ENCODE measurements at regions of chr4 and their contacts with region 1.

Region 1: GRCh38 chr4:15001869-15002658 is at the start of gene CPEB2:
- DNase-seq: peak; percentile 67
- ATAC-seq: peak; percentile 75
- H3K4me3 ChIP-seq: peak within 1 kb of the TSS; percentile 65 to 66
- H3K27ac ChIP-seq: peak within 1 kb of the TSS; percentile 71; the same call in 1 of the 2 replicates
- H3K4me1 ChIP-seq: peaks cover 2 to 18% of the 10 kb centered on the region in 2 experiments; a peak in 3 of 4 replicates
- H3K27me3 ChIP-seq: no peaks in the 10 kb centered on the region
- CTCF ChIP-seq: no peak; a peak in 1 of 6 replicates
- POLR2A ChIP-seq: peak; percentile 80
- RAD21 ChIP-seq: no peak
- total RNA-seq, gene CPEB2: 1.3 TPM

Region 2: DNA sequence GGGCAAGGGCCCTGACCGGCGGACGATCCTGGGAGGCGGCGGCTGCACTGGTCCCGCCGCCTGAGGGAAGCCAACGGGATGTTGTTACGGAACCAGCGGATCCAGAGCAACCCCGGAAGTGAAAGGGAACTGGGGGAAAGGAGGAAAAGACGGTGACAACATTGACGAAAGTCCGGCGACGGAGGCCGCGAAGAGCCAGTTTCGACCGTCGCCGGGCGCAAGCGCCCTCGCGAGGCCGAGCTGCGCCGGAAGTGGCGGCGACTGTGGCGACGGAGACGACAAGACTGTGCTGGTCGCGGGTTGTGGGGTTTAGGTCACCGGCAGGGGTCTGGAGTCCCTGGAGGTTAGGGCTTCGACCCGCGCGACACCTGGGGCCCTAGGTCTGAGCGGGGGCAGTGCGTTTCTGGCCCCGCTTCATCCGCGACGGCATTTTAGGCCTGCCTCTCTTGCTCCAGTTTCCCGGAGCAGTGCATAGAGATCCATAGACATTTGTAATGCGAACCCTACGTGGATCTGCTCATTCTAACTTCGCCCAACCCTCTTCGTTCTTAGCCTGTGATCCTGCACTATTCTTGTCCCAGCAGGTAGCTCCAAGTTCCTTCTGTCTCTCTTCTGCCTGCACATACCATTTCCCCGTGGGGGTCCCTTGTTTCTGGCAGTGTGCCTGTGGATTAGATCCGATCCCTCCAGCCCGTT is 1374.3 kb before region 1 on chr4 and contains the start of gene BOD1L1:
- CTCF ChIA-PET with region 1: no interaction called
- POLR2A ChIA-PET with region 1: no interaction called
- RAD21 ChIA-PET with region 1: no interaction called
- intact Hi-C with region 1: loop called (anchors 10 kb)
- DNase-seq: peak; percentile 85
- ATAC-seq: peak; percentile 89
- H3K4me3 ChIP-seq: peak within 1 kb of the TSS; percentile 80 to 92
- H3K27ac ChIP-seq: peak within 1 kb of the TSS; percentile 59
- H3K4me1 ChIP-seq: peaks cover 9 to 22% of the 10 kb centered on the region in 2 experiments
- H3K27me3 ChIP-seq: no peaks in the 10 kb centered on the region
- CTCF ChIP-seq: peak in 2 of 3 experiments; percentile 32 to 47; a peak in 3 of 6 replicates
- POLR2A ChIP-seq: peak; percentile 65
- RAD21 ChIP-seq: no peak; the same call in 1 of the 2 replicates
- total RNA-seq, gene BOD1L1: 22.4 TPM

Region 3: GRCh38 chr4:14856076-14856933 is 145.8 kb before region 1 on chr4:
- CTCF ChIA-PET with region 1: no interaction called
- POLR2A ChIA-PET with region 1: no interaction called
- RAD21 ChIA-PET with region 1: interaction called in 1 of 2 experiments, 3 read pairs
- intact Hi-C with region 1: loop called (anchors 5 kb)
- DNase-seq: peak; percentile 86
- ATAC-seq: peak; percentile 98
- H3K4me3 ChIP-seq: 0 out of 4 replicates have a peak overlapping the region, but pooled peaks of 1 of the 2 experiments have one; percentile 20
- H3K27ac ChIP-seq: peak overlapping the region; percentile 25; the same call in 1 of the 2 replicates
- H3K4me1 ChIP-seq: peaks cover 16 to 30% of the 10 kb centered on the region in 2 experiments
- H3K27me3 ChIP-seq: no peaks in the 10 kb centered on the region
- CTCF ChIP-seq: no peak
- POLR2A ChIP-seq: no peak
- RAD21 ChIP-seq: no peak